AG04450 (cell line): ENCODE measurements at regions of chr16 and their contacts with region 1.

Region 1: DNA sequence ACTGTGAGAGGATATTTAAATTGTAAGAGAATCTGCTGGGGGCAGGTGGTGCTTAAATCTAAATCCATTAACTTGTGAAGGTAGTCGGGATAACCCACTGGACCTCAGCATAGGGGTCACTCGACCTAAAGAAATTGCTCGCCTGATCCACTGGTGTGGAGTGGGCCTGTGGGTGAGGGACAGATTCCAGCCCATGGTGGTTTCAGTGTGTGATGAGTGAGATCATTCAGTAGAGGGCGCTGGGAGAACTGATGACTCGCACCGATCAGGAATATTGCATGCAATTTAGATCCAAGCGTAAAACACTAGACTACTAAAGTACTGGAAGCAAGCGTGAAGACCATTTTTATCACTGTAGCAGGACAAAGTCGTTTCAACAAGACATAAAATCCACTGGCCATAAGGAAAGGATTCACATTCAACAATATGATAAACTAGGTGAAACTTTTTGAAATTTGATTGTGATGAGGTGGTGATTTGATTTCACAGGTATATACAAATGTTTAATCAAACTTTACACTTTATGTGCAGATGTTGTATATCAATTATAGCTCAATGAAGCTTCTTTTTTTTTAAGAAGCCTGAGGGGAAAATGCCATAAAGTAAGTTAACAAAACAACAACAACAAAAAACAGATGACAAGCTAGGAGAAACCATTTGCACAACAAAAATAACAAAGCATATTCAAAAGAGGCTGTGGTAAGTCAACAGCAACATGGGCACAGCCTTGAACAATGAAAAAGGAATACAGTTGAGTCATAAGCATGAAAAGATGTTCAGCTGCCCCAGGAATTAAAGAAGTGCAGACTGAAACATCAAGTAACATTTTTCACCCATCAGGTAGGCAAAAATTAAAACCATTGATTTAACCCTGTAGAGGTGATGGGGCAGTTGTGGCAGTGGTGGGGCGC is 7.5 kb upstream of the TMEM170A start:
- DNase-seq: peak; percentile 24
- H3K4me3 ChIP-seq: no peak overlapping the region
- H3K27ac ChIP-seq: no peak overlapping the region
- H3K27me3 ChIP-seq: no peaks in the 10 kb centered on the region
- CTCF ChIP-seq: peak; percentile 78

Region 2: GRCh38 chr16:75251280-75252048 is 220.5 kb before region 1 on chr16 and contains the start of gene BCAR1:
- CTCF ChIA-PET with region 1: no interaction called
- POLR2A ChIA-PET with region 1: no interaction called
- DNase-seq: peak; percentile 73
- H3K4me3 ChIP-seq: peak within 1 kb of the TSS; percentile 84
- H3K27ac ChIP-seq: peak within 1 kb of the TSS; percentile 77
- H3K27me3 ChIP-seq: no peaks in the 10 kb centered on the region
- CTCF ChIP-seq: no peak
- polyA plus RNA-seq, gene BCAR1: 16.1 and 26.9 TPM in 2 replicates

Region 3: DNA sequence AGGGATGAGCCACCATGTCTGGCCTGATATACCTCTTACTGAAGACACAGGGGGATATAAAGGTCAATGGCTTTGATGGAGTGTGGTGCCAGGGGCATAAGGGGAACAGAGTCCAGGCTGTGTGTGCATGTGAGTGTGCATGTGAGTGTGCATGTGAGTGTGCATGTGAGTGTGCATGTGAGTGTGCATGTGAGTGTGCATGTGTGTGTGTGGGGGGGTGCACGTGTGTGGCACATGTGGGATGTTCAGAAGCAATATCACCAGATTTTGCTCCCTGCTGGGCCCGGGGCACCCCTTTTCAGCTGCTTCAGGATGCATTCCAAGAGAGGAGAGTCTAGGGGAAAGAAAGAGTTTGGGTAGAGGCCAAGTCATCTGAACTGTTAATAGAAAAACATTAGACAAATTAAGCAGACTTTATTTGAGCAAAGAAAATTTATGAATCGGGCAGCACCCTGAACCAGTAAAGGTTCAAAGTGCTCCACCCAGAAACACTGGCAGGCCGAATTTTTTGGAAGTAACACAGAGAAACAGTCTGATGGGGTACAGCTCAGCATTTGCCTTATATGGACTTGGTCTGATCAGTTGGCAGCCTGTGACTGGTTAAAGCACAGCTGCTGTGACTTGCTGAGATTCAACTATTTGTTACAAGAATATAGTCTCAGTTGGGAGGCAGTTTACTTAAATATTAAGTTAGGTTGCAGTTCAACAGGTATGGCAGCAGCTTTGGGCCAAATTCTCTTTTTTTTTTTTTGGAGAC is 54.2 kb after region 1 on chr16:
- CTCF ChIA-PET with region 1: no interaction called
- POLR2A ChIA-PET with region 1: no interaction called
- DNase-seq: no peak
- H3K4me3 ChIP-seq: no peak overlapping the region
- H3K27ac ChIP-seq: no peak overlapping the region
- H3K27me3 ChIP-seq: no peaks in the 10 kb centered on the region
- CTCF ChIP-seq: no peak

Region 4: DNA sequence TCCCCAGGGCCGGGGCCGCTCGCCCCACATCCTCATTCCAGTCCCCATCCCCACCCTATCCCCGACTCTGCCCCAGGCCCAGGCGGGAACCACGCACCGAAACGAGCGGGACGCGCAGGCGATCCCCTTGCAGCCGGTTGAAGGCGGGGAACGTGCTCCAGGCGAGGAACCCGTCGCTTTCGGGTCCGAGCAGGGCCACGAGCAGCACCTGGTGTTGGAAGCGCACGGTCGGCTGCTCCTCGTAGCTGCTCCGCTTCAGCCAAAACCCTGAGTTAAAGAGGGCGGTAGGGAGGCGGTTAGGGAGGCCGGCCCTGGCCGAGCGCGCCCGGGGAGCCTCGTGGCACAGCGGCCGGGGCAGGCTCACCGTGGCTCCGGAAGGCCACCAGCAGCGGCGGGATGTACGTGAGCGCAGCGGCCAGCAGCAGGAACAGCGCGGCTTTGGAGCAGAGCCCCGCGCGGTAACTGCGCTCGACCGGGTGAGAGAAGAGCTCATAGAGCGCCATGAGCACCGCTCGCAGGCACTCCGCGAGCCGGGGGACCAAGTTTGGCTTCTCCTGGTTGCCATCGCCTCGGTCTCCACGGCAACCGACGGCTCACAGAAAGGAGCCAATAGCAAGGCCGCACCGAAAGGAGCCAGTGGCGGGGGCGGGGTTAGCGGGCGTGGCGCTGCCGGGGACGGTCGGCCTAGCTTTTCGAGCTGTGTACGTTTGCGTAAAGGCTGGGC is 83.9 kb after region 1 on chr16 and contains the start of gene TMEM231:
- CTCF ChIA-PET with region 1: interaction called, 53 read pairs
- POLR2A ChIA-PET with region 1: no interaction called
- DNase-seq: peak; percentile 51
- H3K4me3 ChIP-seq: peak within 1 kb of the TSS; percentile 76
- H3K27ac ChIP-seq: peak within 1 kb of the TSS; percentile 39
- H3K27me3 ChIP-seq: no peaks in the 10 kb centered on the region
- CTCF ChIP-seq: 0 out of 2 replicates have a peak, but pooled peaks have one; percentile 8
- polyA plus RNA-seq, gene TMEM231: 10.6 and 16.7 TPM in 2 replicates

Region 5: GRCh38 chr16:75593825-75594820 is 122.1 kb after region 1 on chr16:
- CTCF ChIA-PET with region 1: interaction called, 14 read pairs
- POLR2A ChIA-PET with region 1: no interaction called
- DNase-seq: no peak
- H3K4me3 ChIP-seq: no peak overlapping the region
- H3K27ac ChIP-seq: peak overlapping the region; percentile 43
- H3K27me3 ChIP-seq: no peaks in the 10 kb centered on the region
- CTCF ChIP-seq: no peak

Region 6: DNA sequence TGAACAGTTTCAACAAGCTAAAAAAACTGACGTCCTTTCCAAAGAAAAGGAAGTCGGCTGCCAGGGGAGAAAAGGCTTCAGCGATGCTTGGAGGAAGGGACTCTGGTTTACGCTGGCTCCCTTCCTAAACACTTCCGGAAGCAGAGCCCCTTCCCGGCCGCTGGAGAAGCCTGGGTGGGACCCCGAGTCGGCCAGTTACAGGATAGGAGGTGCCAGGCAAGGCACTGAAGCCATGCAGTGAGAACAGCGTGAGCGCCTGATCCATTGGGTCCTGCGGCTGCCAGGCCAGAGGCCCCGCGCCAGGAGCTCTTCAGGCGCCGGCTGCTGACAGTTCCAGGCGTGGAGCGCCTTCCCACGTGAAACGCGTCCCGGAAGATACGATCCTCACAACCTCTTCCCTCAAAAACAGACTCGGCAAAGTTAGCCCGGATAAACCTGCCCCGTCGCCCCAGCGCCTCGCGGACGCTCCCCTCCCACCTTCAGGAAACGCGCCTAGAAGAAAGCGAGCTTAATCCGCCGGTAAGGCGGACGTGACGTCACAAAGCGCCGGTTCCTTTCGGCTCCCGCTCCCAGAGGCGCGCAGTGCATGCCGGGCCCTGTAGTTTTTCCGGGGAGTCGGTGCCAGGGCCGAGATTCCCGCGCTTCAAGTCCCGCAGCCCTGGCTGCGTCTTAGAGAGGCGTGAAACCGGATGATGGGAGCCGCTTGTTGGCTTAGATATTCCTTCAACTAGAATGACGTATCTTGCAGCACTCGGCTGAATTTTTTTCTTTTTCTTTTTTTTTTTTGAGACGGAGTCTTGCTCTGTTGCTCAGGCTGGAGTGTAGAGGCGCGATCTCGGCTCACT is 151.0 kb after region 1 on chr16 and contains the start of gene ADAT1:
- CTCF ChIA-PET with region 1: interaction called, 34 read pairs
- POLR2A ChIA-PET with region 1: no interaction called
- DNase-seq: peak; percentile 94
- H3K4me3 ChIP-seq: peak within 1 kb of the TSS; percentile 85
- H3K27ac ChIP-seq: peak within 1 kb of the TSS; percentile 79
- H3K27me3 ChIP-seq: no peaks in the 10 kb centered on the region
- CTCF ChIP-seq: no peak
- polyA plus RNA-seq, gene ADAT1: 32.2 and 32.5 TPM in 2 replicates

Region 7: DNA sequence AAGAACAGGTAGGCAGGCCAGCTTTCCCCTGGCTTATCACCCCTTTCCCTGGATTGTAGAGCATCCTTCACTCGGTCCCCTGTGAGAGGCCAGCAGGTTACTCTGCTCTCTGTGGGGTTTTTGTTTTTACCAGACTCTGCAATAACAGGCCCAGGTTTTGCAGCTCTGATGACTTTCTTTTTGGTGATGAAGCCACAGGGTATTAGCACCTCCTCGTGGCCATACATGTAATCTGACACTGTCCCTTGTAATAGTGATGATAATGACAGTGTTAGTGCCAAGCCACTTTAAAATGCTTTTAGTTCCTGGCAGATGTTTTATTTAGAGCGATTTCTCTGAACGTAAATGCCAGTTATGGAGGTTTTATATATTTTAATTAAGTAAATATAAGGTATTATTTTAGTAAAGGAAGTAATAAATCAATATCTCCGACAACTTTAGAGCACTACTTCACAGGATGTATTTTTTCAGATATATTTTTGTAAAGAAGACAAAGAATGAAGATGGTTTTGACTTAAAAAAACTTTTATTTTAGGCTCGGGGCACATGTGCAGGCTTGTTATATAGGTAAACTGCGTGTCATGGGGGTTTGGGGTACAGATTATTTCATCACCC is 292.3 kb after region 1 on chr16:
- CTCF ChIA-PET with region 1: interaction called, 23 read pairs
- POLR2A ChIA-PET with region 1: no interaction called
- DNase-seq: peak; percentile 32
- H3K4me3 ChIP-seq: no peak overlapping the region
- H3K27ac ChIP-seq: no peak overlapping the region
- H3K27me3 ChIP-seq: no peaks in the 10 kb centered on the region
- CTCF ChIP-seq: peak; percentile 87